Activated CD4-positive, alpha-beta memory T cell treated with anti-CD3 and anti-CD28 coated beads for 36 hours (primary cell): ENCODE measurements at regions of chr6 and their contacts with region 1.

Region 1: GRCh38 chr6:166106076-166106686 is 61.5 kb downstream of the TBXT start:
- DNase-seq: peak; percentile 78
- H3K4me3 Mint-ChIP-seq: no peak overlapping the region
- H3K27ac Mint-ChIP-seq: no peak overlapping the region
- H3K4me1 Mint-ChIP-seq: peaks cover 3% of the 10 kb centered on the region
- H3K27me3 Mint-ChIP-seq: peaks cover 7% of the 10 kb centered on the region

Region 2: GRCh38 chr6:165439928-165440554 is 666.1 kb before region 1 on chr6:
- CTCF ChIA-PET with region 1: no interaction called
- POLR2A ChIA-PET with region 1: no interaction called
- intact Hi-C with region 1: loop called (anchors 5 kb)
- DNase-seq: no peak
- H3K4me3 Mint-ChIP-seq: no peak overlapping the region
- H3K27ac Mint-ChIP-seq: no peak overlapping the region
- H3K4me1 Mint-ChIP-seq: no peaks in the 10 kb centered on the region
- H3K27me3 Mint-ChIP-seq: no peaks in the 10 kb centered on the region

Region 3: DNA sequence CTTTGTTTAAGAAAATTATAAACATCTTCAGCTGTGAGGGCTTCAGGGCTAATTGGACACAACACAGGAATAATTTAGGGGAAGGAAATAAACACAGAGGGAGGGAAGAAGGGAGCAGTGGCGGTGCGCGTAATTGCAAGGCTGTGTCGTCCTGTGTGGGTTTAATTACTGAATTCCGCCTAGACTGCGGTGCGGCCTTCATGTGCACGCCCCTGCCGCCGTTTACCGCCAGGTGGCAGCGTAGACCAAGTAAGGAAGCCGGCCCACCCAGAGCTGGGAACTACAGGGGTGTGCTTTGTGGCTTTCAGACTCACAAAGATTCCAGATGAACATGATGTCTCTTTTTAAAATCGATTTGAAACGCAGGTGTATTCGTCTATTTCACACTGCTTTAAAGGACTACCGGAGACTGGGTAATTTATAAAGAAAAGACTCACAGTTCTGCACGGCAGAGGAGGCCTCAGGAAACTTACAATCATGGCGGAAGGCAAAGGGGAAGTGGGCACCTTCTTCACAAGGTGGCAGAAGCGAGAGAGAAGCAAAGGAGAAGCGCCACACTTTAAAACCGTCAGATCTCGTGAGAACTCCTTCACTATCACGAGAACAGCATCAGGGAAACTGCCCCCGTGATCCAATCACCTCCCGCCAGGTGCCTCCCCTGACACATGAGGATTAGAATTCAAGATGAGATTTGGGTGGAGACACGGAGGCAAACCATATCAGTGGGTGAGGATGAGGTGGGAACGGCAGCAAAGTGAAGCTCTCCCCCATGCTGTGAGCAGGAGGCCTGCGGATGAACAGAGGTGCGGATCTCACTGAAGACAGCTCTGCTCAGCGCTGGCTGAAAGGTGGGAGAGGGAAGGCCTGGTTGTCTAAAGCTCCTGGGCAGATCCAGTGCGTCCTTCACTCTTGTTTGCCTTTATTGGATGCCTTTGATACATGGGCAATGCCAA is 221.1 kb before region 1 on chr6:
- CTCF ChIA-PET with region 1: interaction called, 25 read pairs
- POLR2A ChIA-PET with region 1: no interaction called
- intact Hi-C with region 1: loop called (anchors 1 kb)
- DNase-seq: peak; percentile 75
- H3K4me3 Mint-ChIP-seq: no peak overlapping the region
- H3K27ac Mint-ChIP-seq: no peak overlapping the region
- H3K4me1 Mint-ChIP-seq: peaks cover 6% of the 10 kb centered on the region
- H3K27me3 Mint-ChIP-seq: peaks cover 9% of the 10 kb centered on the region

Region 4: GRCh38 chr6:166032366-166033171 is 73.6 kb before region 1 on chr6:
- CTCF ChIA-PET with region 1: no interaction called
- POLR2A ChIA-PET with region 1: no interaction called
- intact Hi-C with region 1: no loop called
- DNase-seq: no peak
- H3K4me3 Mint-ChIP-seq: no peak overlapping the region
- H3K27ac Mint-ChIP-seq: no peak overlapping the region
- H3K4me1 Mint-ChIP-seq: no peaks in the 10 kb centered on the region
- H3K27me3 Mint-ChIP-seq: no peaks in the 10 kb centered on the region